ENCODE measurements at regions of chr10 and their contacts with region 1.

Region 1: DNA sequence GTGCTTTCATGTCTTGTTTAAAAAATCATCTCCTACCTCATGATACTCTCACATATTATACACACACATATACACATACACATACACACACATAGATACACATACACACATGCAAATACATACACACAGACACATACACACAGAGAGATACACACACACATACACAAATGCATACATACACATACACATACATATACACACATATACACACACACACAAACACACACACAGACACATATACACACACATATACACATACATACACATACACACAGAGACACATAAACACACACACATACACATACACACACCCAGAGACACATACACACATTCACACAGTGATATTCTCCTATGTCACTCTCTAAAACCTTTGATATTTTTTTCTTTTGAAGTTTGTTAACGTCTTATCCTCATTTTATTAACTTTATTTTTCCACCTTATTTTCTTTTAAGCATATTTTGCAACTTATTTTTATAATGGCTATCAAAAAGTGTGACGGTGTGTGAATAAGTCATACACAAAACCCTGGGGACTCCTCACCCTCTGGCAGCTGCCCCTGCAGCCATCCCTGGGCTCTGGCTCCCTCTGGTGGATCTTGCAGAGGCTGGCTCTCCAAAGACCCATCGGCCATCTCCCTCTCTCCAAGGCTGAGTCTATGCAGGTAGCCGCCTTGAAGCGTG is 3.9 kb upstream of the C10orf120 start:
- DNase-seq: peak; percentile 75
- H3K4me3 Mint-ChIP-seq: no peak overlapping the region
- H3K27ac Mint-ChIP-seq: no peak overlapping the region
- H3K4me1 Mint-ChIP-seq: no peaks in the 10 kb centered on the region
- H3K27me3 Mint-ChIP-seq: peaks cover 24% of the 10 kb centered on the region
- CTCF ChIP-seq: peak; percentile 54

Region 2: GRCh38 chr10:122279725-122280141 is 423.8 kb before region 1 on chr10:
- CTCF ChIA-PET with region 1: no interaction called
- intact Hi-C with region 1: loop called (anchors 10 kb)
- DNase-seq: peak; percentile 57
- H3K4me3 Mint-ChIP-seq: no peak overlapping the region
- H3K27ac Mint-ChIP-seq: no peak overlapping the region
- H3K4me1 Mint-ChIP-seq: no peaks in the 10 kb centered on the region
- H3K27me3 Mint-ChIP-seq: no peaks in the 10 kb centered on the region
- CTCF ChIP-seq: peak; percentile 55

Region 3: GRCh38 chr10:122446668-122447423 is 256.7 kb before region 1 on chr10:
- CTCF ChIA-PET with region 1: no interaction called
- intact Hi-C with region 1: loop called (anchors 5 kb)
- DNase-seq: no peak
- H3K4me3 Mint-ChIP-seq: no peak overlapping the region
- H3K27ac Mint-ChIP-seq: no peak overlapping the region
- H3K4me1 Mint-ChIP-seq: no peaks in the 10 kb centered on the region
- H3K27me3 Mint-ChIP-seq: no peaks in the 10 kb centered on the region
- CTCF ChIP-seq: no peak

Region 4: GRCh38 chr10:122525788-122526187 is 177.8 kb before region 1 on chr10:
- CTCF ChIA-PET with region 1: no interaction called
- intact Hi-C with region 1: loop called (anchors 2 kb)
- DNase-seq: peak; percentile 57
- H3K4me3 Mint-ChIP-seq: no peak overlapping the region
- H3K27ac Mint-ChIP-seq: no peak overlapping the region
- H3K4me1 Mint-ChIP-seq: no peaks in the 10 kb centered on the region
- H3K27me3 Mint-ChIP-seq: peaks cover 46% of the 10 kb centered on the region
- CTCF ChIP-seq: peak; percentile 53

Region 5: DNA sequence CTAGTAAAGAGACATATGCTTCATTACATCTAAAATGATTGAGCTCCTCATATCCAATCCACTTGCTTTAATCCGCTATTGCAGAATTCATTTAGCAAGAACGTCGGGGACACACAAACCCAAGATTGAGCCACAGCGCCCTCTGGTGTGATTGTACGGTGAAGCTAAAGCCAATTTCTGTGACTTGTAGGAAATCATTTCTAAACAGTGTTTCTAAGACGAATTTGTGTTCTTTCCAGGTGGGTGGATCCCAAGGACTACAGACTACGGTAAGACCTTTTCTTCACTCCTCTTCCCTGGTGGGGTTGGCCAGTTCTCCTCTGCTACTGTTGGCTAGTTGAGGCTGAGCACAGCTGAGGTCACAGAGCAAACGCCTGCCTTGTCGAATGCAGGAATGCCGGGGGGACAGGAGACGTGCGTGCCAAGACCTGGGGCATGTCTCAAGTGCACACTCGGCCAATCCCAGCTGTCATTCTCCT is 137.8 kb before region 1 on chr10:
- CTCF ChIA-PET with region 1: no interaction called
- intact Hi-C with region 1: loop called (anchors 2 kb)
- DNase-seq: peak; percentile 72
- H3K4me3 Mint-ChIP-seq: no peak overlapping the region
- H3K27ac Mint-ChIP-seq: no peak overlapping the region
- H3K4me1 Mint-ChIP-seq: peaks cover 16% of the 10 kb centered on the region
- H3K27me3 Mint-ChIP-seq: peaks cover 36% of the 10 kb centered on the region
- CTCF ChIP-seq: peak; percentile 55

Region 6: GRCh38 chr10:122648599-122649428 is 54.8 kb before region 1 on chr10:
- CTCF ChIA-PET with region 1: no interaction called
- intact Hi-C with region 1: loop called (anchors 1 kb)
- DNase-seq: peak; percentile 24
- H3K4me3 Mint-ChIP-seq: no peak overlapping the region
- H3K27ac Mint-ChIP-seq: no peak overlapping the region
- H3K4me1 Mint-ChIP-seq: no peaks in the 10 kb centered on the region
- H3K27me3 Mint-ChIP-seq: peaks cover 48% of the 10 kb centered on the region
- CTCF ChIP-seq: no peak

Measured in Calu3 (cell line).